Activated CD4-positive, alpha-beta memory T cell treated with anti-CD3 and anti-CD28 coated beads, Interleukin-2, amount 10 ng/mL, durations not matched to agents 7 days and 5 days (primary cell): ENCODE measurements at regions of chr2 and their contacts with region 1.

Region 1: DNA sequence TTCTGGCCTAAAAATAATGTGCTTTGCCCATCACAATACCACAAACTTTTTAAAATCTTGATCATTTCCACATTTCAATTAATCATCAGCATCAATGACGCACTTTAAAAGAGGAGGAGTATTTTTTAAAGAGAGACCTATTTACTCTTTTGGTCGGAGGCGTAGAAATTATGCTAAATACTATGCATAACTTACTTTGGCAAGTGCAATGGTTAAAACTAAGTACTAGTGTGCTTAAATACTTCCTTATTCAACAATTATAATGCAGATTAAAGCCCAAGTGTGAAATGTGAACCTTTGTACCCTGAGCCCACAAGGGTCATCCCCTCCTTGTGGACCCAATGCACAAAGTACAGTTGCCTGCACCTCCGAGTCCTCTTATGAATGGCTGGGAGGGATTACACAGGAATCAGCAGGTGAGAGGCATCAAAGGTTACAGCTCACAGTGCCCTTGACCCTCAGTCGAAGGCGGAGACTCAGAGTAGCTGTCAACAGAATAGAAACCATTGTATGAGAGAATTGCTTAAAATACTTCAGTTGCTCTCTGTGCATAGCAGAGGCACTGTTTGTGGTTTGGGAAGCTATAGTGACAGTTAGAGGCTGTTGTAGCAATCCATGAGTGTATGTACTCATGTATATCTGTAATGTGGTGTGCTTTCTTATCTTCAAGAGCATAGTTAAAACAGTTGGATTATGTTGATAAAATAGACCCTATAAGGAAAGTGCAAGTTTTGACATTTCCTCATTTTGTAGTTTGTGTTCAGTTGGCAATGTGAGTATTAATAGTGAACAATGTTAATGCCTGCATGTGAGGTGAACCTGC is 151.7 kb upstream of the ITGA4 start:
- DNase-seq: peak; percentile 72
- H3K4me3 Mint-ChIP-seq: peak overlapping the region; percentile 47
- H3K27ac Mint-ChIP-seq: peak overlapping the region; percentile 85
- H3K4me1 Mint-ChIP-seq: peaks cover 78% of the 10 kb centered on the region
- H3K27me3 Mint-ChIP-seq: no peaks in the 10 kb centered on the region

Region 2: GRCh38 chr2:181123798-181124231 is 181.7 kb before region 1 on chr2:
- CTCF ChIA-PET with region 1: interaction called, 4 read pairs
- POLR2A ChIA-PET with region 1: interaction called, 134 read pairs
- DNase-seq: peak; percentile 75
- H3K4me3 Mint-ChIP-seq: peak overlapping the region; percentile 48
- H3K27ac Mint-ChIP-seq: peak overlapping the region; percentile 85
- H3K4me1 Mint-ChIP-seq: peaks cover 74% of the 10 kb centered on the region
- H3K27me3 Mint-ChIP-seq: no peaks in the 10 kb centered on the region

Region 3: DNA sequence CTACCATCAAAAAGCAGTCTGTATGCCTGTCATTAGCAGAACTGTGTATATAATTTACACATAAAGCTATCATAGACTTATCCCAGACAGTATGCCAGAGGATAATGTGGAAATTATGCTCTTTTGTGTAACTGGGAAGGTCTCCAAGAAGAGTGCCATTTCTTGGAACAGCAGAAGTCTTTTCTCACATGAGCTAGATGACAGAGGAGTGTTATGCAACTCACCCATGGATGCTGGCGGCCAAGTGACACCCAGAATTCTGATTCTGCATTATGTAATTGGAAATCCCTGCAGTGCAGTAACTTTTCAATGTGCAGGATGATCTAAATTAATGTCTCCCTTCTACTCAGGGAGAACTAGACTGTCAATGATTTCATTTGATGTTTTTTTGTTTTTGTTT is 165.1 kb before region 1 on chr2:
- CTCF ChIA-PET with region 1: interaction called, 3 read pairs
- POLR2A ChIA-PET with region 1: interaction called, 17 read pairs
- DNase-seq: no peak
- H3K4me3 Mint-ChIP-seq: peak overlapping the region; percentile 65
- H3K27ac Mint-ChIP-seq: peak overlapping the region; percentile 79
- H3K4me1 Mint-ChIP-seq: peaks cover 76% of the 10 kb centered on the region
- H3K27me3 Mint-ChIP-seq: no peaks in the 10 kb centered on the region

Region 4: DNA sequence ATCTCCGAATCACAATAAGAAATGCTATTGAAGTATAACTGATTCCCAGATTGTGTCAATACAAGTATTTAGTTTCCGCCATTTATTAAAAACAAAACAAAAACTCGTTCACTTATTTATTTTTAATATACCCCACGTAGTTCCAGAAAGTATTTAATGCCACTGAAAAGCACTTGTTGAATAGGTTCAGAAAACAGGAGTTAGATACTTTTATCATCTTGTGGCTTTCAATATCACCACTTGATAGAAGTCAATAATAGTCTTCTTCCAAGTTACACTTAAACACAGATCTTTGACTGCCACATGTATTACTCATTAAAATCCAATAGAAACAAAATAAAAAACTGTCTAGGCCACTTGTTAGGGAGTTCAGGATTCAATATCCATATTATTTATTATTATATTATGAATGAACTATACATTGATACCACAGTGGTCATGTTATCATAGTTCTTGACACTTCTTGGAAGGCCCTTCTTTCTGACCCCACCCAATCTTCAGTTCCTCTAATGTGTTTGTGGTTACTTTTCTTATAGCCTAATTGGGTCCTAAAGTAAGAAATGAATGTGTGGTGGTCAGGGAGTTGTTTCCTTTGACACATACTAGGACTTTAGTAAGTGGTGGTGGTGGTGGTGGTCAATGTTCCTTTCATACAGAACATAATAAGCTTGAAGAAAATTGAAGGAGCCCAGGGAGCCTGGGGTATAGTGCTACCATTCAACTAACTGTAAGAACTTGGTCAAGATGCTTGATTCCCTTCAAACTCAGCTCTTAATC is 69.6 kb before region 1 on chr2:
- CTCF ChIA-PET with region 1: interaction called, 4 read pairs
- POLR2A ChIA-PET with region 1: interaction called, 14 read pairs
- DNase-seq: peak; percentile 27
- H3K4me3 Mint-ChIP-seq: no peak overlapping the region
- H3K27ac Mint-ChIP-seq: peak overlapping the region; percentile 19
- H3K4me1 Mint-ChIP-seq: peaks cover 72% of the 10 kb centered on the region
- H3K27me3 Mint-ChIP-seq: no peaks in the 10 kb centered on the region

Region 5: DNA sequence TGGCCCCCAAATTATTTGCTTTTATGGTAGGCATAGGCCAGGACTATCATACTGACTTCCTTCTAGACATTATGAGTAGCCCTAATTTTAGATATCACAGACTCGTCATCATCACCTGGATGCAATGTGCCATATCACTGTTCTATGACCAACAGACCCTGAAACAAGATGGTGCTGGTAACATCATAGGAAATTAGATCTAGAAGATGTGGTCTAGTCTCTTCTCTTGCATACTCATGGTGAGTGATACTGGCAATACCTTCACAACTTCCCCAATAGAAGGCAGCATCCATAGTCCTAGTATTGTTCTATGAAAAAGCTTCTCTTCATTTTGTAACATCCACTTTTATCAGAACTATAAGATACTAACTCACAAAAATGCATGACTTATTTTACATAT is 35.4 kb after region 1 on chr2:
- CTCF ChIA-PET with region 1: no interaction called
- POLR2A ChIA-PET with region 1: no interaction called
- DNase-seq: no peak
- H3K4me3 Mint-ChIP-seq: no peak overlapping the region
- H3K27ac Mint-ChIP-seq: no peak overlapping the region
- H3K4me1 Mint-ChIP-seq: no peaks in the 10 kb centered on the region
- H3K27me3 Mint-ChIP-seq: no peaks in the 10 kb centered on the region

Region 6: GRCh38 chr2:181361226-181361625 is 55.7 kb after region 1 on chr2:
- CTCF ChIA-PET with region 1: no interaction called
- POLR2A ChIA-PET with region 1: no interaction called
- DNase-seq: no peak
- H3K4me3 Mint-ChIP-seq: no peak overlapping the region
- H3K27ac Mint-ChIP-seq: no peak overlapping the region
- H3K4me1 Mint-ChIP-seq: peaks cover 10% of the 10 kb centered on the region
- H3K27me3 Mint-ChIP-seq: peaks cover 2% of the 10 kb centered on the region

Region 7: GRCh38 chr2:181466661-181467576 is 161.4 kb after region 1 on chr2:
- CTCF ChIA-PET with region 1: interaction called, 18 read pairs
- POLR2A ChIA-PET with region 1: interaction called, 611 read pairs
- DNase-seq: peak; percentile 84
- H3K4me3 Mint-ChIP-seq: peak overlapping the region; percentile 29
- H3K27ac Mint-ChIP-seq: peak overlapping the region; percentile 41
- H3K4me1 Mint-ChIP-seq: peaks cover 90% of the 10 kb centered on the region
- H3K27me3 Mint-ChIP-seq: no peaks in the 10 kb centered on the region